ENCODE measurements at regions of chr15 and their contacts with region 1.

Region 1: GRCh38 chr15:44968475-44968874 is 12.0 kb downstream of the TERB2 start:
- DNase-seq: no peak
- H3K4me3 Mint-ChIP-seq: no peak overlapping the region
- H3K27ac Mint-ChIP-seq: no peak overlapping the region
- H3K4me1 Mint-ChIP-seq: no peaks in the 10 kb centered on the region
- H3K27me3 Mint-ChIP-seq: no peaks in the 10 kb centered on the region
- CTCF ChIP-seq: no peak

Region 2: GRCh38 chr15:45037936-45038335 is 69.5 kb after region 1 on chr15:
- CTCF ChIA-PET with region 1: interaction called, 5 read pairs
- intact Hi-C with region 1: loop called (anchors 2 kb)
- DNase-seq: no peak
- H3K4me3 Mint-ChIP-seq: no peak overlapping the region
- H3K27ac Mint-ChIP-seq: no peak overlapping the region
- H3K4me1 Mint-ChIP-seq: peaks cover 9% of the 10 kb centered on the region
- H3K27me3 Mint-ChIP-seq: no peaks in the 10 kb centered on the region
- CTCF ChIP-seq: no peak

Measured in Calu3 (cell line).